Heart right ventricle (tissue), 16 donors: ENCODE measurements at regions of chr11 and their contacts with region 1.

Region 1: GRCh38 chr11:69744435-69744834 is 30.7 kb downstream of the FGF4 start:
- DNase-seq: no peak
- ATAC-seq: no peak
- H3K4me3 ChIP-seq: no peak overlapping the region
- H3K27ac ChIP-seq: no peak overlapping the region
- H3K4me1 ChIP-seq: no peaks in the 10 kb centered on the region
- H3K27me3 ChIP-seq: peaks cover 0 to 47% (median 13%) of the 10 kb centered on the region in 7 donors
- CTCF ChIP-seq: no peak

Region 2: GRCh38 chr11:68016898-68017817 is 1727.3 kb before region 1 on chr11:
- intact Hi-C with region 1: loop called in 1 of 10 experiments (anchors 5 kb)
- DNase-seq: no peak
- ATAC-seq: no peak
- H3K4me3 ChIP-seq: no peak overlapping the region
- H3K27ac ChIP-seq: no peak overlapping the region
- H3K4me1 ChIP-seq: peaks cover 0 to 30% (median 5%) of the 10 kb centered on the region in 9 donors
- H3K27me3 ChIP-seq: no peaks in the 10 kb centered on the region
- CTCF ChIP-seq: no peak